ENCODE measurements at regions of chr10 and their contacts with region 1.

Region 1: DNA sequence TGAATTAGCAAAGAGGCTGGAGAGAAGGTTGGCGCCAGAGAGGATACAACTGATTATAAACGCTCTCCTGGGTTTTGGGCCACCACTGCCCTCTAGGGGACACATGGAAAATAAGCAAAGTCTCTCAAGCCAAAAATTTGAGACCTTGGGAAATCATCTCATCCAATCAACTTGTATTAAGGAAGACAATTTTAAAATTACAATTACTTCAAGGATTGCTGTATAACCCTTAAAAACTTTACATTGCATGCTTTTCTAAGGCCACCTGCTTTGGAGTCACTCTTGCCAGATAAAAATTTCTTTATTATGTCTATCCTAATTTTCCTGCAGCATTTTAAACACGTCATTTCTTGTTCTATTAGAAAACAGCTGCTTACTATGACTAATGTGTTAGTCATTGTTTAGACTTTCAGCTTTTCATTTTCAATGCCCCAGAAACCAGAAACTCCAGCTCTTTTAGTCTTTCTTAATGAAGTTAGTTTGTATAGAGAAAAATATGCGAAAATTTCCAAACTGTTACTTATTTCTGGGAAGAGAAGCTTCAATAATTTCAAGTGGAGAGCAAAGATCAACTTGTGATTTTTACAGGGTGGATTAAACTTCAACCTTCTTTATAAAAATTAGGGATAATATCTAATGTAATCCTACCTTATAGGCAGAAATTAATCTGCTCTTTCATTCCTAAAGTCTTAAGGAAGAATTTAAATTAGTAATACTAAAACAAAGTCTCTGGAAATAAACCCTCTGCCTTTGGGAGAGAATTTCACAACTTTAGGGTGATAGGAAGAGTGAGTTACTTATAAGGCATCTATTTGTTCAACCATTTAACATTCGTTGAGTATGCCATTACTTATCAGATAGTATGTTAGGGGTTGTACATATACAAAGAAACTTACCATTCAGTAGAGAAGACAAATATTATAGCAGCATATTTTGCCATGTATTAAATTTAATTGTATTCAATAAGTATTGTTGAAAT is 20.6 kb upstream of the RHOBTB1 start:
- DNase-seq: peak in 1 of 2 donors; percentile 77
- H3K4me3 ChIP-seq: no peak overlapping the region
- H3K27ac ChIP-seq: peak overlapping the region in 1 of 2 donors; percentile 40
- H3K4me1 ChIP-seq: peaks cover 3 to 6% of the 10 kb centered on the region in 2 donors
- H3K27me3 ChIP-seq: no peaks in the 10 kb centered on the region
- CTCF ChIP-seq: peak; percentile 69 to 81 (median 80)

Region 2: DNA sequence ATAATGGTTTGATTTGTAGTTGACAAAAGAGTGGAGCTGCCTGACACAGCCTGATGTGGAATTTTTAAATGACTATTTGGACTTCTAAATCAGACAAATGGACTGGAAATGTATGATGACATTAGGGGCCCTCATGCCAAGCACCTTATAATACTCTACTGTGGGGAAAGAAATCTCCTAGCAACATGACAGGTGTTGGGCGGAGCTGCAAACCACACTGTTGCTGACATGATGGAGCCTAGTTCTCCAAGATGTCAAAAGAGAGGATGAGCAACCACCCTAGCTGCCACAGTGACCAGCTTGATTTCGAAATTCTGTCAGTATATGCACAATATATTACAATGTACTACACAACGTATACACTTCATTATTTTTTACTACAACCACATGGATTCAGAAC is 86.3 kb before region 1 on chr10:
- intact Hi-C with region 1: loop called (anchors 5 kb)
- DNase-seq: no peak
- H3K4me3 ChIP-seq: no peak overlapping the region
- H3K27ac ChIP-seq: no peak overlapping the region
- H3K4me1 ChIP-seq: peaks cover 0 to 17% of the 10 kb centered on the region in 2 donors
- H3K27me3 ChIP-seq: no peaks in the 10 kb centered on the region
- CTCF ChIP-seq: no peak

Region 3: GRCh38 chr10:60901561-60902235 is 62.8 kb before region 1 on chr10:
- intact Hi-C with region 1: loop called (anchors 5 kb)
- DNase-seq: no peak
- H3K4me3 ChIP-seq: no peak overlapping the region
- H3K27ac ChIP-seq: peak overlapping the region; percentile 9 to 37
- H3K4me1 ChIP-seq: peaks cover 4 to 24% of the 10 kb centered on the region in 2 donors
- H3K27me3 ChIP-seq: no peaks in the 10 kb centered on the region
- CTCF ChIP-seq: no peak

Region 4: GRCh38 chr10:61284222-61284890 is 319.8 kb after region 1 on chr10:
- intact Hi-C with region 1: loop called (anchors 2 kb)
- DNase-seq: no peak
- H3K4me3 ChIP-seq: peak overlapping the region in 1 of 2 donors; percentile 37
- H3K27ac ChIP-seq: no peak overlapping the region
- H3K4me1 ChIP-seq: no peaks in the 10 kb centered on the region
- H3K27me3 ChIP-seq: no peaks in the 10 kb centered on the region
- CTCF ChIP-seq: peak; percentile 52 to 77 (median 73)

Region 5: GRCh38 chr10:61376862-61377368 is 412.4 kb after region 1 on chr10:
- intact Hi-C with region 1: no loop called
- DNase-seq: no peak
- H3K4me3 ChIP-seq: no peak overlapping the region
- H3K27ac ChIP-seq: no peak overlapping the region
- H3K4me1 ChIP-seq: no peaks in the 10 kb centered on the region
- H3K27me3 ChIP-seq: no peaks in the 10 kb centered on the region
- CTCF ChIP-seq: no peak